Activated CD4-positive, alpha-beta T cell treated with anti-CD3 and anti-CD28 coated beads for 36 hours (primary cell): ENCODE measurements at regions of chr2 and their contacts with region 1.

Region 1: GRCh38 chr2:178306352-178307073 is 112.2 kb downstream of the OSBPL6 start:
- DNase-seq: peak; percentile 59
- ATAC-seq: peak; percentile 77
- H3K4me3 Mint-ChIP-seq: no peak overlapping the region
- H3K27ac Mint-ChIP-seq: no peak overlapping the region
- H3K4me1 Mint-ChIP-seq: no peaks in the 10 kb centered on the region
- H3K27me3 Mint-ChIP-seq: peaks cover 12% of the 10 kb centered on the region

Region 2: DNA sequence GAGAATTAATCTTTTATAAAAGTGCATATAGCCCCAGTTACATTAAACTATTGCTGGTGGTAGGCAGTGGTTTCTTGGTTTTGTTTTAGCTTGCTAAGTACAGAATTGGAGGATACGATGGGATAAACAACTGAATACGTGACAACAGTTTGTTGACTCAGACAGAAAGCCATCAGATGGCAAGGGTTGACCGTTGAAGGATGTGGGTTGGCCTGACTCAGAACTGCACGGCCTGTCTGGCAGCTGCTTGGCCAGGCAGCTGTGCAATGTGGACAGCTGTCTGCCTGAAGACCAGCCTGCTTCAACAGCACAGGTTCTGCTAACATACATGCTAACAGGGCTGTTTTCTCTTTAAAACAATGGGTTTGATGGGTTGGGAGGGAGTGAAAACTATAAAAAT is 97.9 kb after region 1 on chr2:
- CTCF ChIA-PET with region 1: interaction called, 3 read pairs
- POLR2A ChIA-PET with region 1: no interaction called
- intact Hi-C with region 1: loop called in 1 of 2 experiments (anchors 1 kb)
- DNase-seq: peak; percentile 37
- ATAC-seq: peak; percentile 78
- H3K4me3 Mint-ChIP-seq: no peak overlapping the region
- H3K27ac Mint-ChIP-seq: no peak overlapping the region
- H3K4me1 Mint-ChIP-seq: peaks cover 10% of the 10 kb centered on the region
- H3K27me3 Mint-ChIP-seq: peaks cover 2% of the 10 kb centered on the region